HepG2 (cell line): ENCODE measurements at regions of chr3 and their contacts with region 1.

Region 1: DNA sequence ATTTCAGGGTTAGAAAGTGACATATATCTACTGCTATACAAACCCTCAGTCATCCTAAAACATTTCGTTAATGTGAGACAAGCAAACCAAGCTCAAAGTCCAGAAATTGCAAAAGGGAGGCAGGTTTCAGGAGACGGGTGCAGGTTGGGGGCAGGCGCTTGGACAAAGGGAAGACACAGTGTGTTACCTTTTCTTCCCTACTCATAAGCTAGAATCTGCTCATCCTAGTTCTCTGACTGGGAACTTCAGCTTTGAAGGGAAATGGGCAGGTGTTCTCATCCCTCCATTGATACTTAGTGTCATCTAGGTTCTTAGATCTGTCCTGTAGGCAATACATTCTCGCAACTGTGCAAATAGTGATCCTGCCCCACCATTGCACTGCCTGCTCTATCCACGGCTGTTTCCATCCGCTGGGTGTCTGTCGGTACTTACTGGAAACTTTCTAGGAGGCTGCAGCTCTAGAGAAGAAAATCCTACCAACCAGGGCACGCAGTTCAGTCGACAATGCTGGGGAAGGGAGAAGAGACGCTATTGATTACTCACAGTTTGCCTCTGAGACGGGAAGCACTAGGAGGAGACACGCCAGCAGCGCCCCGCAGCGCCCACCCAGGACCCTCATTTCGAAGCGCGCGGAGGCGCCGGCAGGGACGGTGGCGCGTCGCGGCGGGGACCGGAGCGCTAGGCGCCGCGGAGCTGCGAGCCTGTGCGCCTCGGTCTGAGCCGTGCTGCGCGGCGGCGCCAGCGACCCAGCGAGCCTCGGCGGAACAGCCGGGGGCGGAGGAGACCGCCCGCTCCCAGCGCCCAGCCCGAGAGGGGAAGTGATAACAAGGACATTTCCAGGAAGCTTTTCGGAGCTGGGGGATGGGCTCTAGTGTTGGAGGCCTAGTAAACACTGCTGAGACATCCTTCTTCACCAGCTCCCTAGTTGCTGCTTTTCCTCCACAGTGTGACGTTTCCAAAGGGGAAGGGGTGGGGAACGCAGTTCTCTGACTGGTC is at the start of gene PROS1:
- DNase-seq: peak; percentile 85
- ATAC-seq: peak; percentile 95
- H3K4me3 ChIP-seq: peak within 1 kb of the TSS; percentile 77 to 84 (median 81)
- H3K27ac ChIP-seq: peak within 1 kb of the TSS; percentile 91
- H3K4me1 ChIP-seq: peaks cover 14% of the 10 kb centered on the region
- H3K27me3 ChIP-seq: no peaks in the 10 kb centered on the region; a peak in 1 of 5 replicates
- CTCF ChIP-seq: peak; percentile 41; the same call in 1 of the 2 replicates
- EP300 ChIP-seq: peak in 1 of 2 experiments; percentile 1; a peak in 1 of 4 replicates
- POLR2A ChIP-seq: peak; percentile 60 to 66
- RAD21 ChIP-seq: peak; percentile 31; the same call in 1 of the 2 replicates
- total RNA-seq, gene PROS1: 45.6 and 76.8 TPM in 2 replicates

Region 2: GRCh38 chr3:93924491-93924890 is 48.9 kb before region 1 on chr3:
- CTCF ChIA-PET with region 1: no interaction called
- POLR2A ChIA-PET with region 1: no interaction called
- in situ Hi-C with region 1: no loop called
- intact Hi-C with region 1: loop called (anchors 5 kb)
- DNase-seq: no peak
- ATAC-seq: no peak
- H3K4me3 ChIP-seq: no peak overlapping the region
- H3K27ac ChIP-seq: no peak overlapping the region
- H3K4me1 ChIP-seq: no peaks in the 10 kb centered on the region
- H3K27me3 ChIP-seq: no peaks in the 10 kb centered on the region
- CTCF ChIP-seq: no peak
- EP300 ChIP-seq: no peak
- POLR2A ChIP-seq: no peak
- RAD21 ChIP-seq: no peak

Region 3: DNA sequence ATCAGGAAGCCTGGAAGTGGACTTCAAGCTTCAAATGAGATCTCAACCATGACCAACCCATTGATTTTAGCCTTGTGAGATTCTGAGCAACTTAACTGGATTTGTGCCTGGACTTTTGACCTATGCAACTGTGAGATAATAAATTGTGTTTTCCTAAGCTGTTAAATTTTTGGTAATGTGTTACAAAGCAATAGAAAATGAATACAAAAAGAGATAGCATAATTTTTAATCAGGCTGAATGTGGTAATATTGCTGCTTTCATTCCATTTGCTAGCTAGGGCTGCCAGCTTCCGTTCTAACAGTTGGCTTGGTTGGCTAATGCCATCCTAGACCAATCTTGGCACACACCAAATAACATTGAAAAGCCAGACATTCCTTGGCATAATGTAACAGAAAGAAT is 11.9 kb before region 1 on chr3:
- CTCF ChIA-PET with region 1: no interaction called
- POLR2A ChIA-PET with region 1: interaction called, 10 read pairs
- in situ Hi-C with region 1: no loop called
- intact Hi-C with region 1: no loop called
- DNase-seq: no peak
- ATAC-seq: no peak
- H3K4me3 ChIP-seq: no peak overlapping the region
- H3K27ac ChIP-seq: no peak overlapping the region
- H3K4me1 ChIP-seq: peaks cover 27% of the 10 kb centered on the region
- H3K27me3 ChIP-seq: no peaks in the 10 kb centered on the region
- CTCF ChIP-seq: no peak
- EP300 ChIP-seq: no peak
- POLR2A ChIP-seq: no peak
- RAD21 ChIP-seq: no peak

Region 4: DNA sequence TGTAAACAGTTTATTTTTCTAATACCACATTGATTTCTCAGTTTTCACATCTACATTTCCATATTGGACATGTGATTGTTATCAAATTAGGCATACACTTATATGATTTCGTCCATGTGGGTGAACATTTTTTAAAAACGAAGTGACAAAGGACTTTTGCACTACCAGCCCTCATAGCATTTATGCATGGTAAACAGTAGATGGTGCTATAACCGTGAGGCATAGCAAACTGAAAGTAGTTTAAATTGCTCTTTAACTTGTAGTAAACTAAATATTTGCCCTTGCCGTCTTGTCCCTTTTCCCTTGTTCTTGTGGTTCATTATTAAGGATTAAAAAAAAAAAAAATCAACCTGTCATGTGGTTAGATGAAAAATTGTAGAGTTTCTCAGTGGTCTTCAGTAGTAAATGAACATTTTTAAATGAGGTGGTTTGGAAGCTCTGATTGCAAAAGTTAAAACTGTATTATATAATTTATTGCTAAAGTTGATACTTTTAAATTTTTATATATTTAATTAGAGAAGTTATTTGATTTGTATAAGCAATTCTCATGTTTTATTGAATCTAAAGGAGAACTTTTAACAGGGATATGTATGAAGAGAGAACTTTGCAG is 31.0 kb after region 1 on chr3:
- CTCF ChIA-PET with region 1: no interaction called
- POLR2A ChIA-PET with region 1: interaction called, 3 read pairs
- in situ Hi-C with region 1: no loop called
- intact Hi-C with region 1: loop called (anchors 1 kb)
- DNase-seq: peak; percentile 60
- ATAC-seq: peak; percentile 67
- H3K4me3 ChIP-seq: 0 out of 6 replicates have a peak overlapping the region, but pooled peaks of 1 of the 3 experiments have one; percentile 31
- H3K27ac ChIP-seq: peak overlapping the region; percentile 11
- H3K4me1 ChIP-seq: no peaks in the 10 kb centered on the region
- H3K27me3 ChIP-seq: no peaks in the 10 kb centered on the region
- CTCF ChIP-seq: peak; percentile 81
- EP300 ChIP-seq: no peak
- POLR2A ChIP-seq: no peak
- RAD21 ChIP-seq: no peak

Region 5: GRCh38 chr3:94076055-94076454 is 102.6 kb after region 1 on chr3:
- CTCF ChIA-PET with region 1: no interaction called
- POLR2A ChIA-PET with region 1: no interaction called
- in situ Hi-C with region 1: no loop called
- intact Hi-C with region 1: no loop called
- DNase-seq: no peak
- ATAC-seq: no peak
- H3K4me3 ChIP-seq: no peak overlapping the region
- H3K27ac ChIP-seq: no peak overlapping the region
- H3K4me1 ChIP-seq: peaks cover 15% of the 10 kb centered on the region
- H3K27me3 ChIP-seq: no peaks in the 10 kb centered on the region
- CTCF ChIP-seq: no peak
- EP300 ChIP-seq: no peak
- POLR2A ChIP-seq: no peak
- RAD21 ChIP-seq: no peak

Region 6: GRCh38 chr3:94162700-94163099 is 189.3 kb after region 1 on chr3:
- CTCF ChIA-PET with region 1: no interaction called
- POLR2A ChIA-PET with region 1: no interaction called
- in situ Hi-C with region 1: no loop called
- intact Hi-C with region 1: no loop called
- DNase-seq: peak; percentile 13
- ATAC-seq: peak; percentile 50; the same call in 2 of the 3 replicates
- H3K4me3 ChIP-seq: no peak overlapping the region
- H3K27ac ChIP-seq: no peak overlapping the region
- H3K4me1 ChIP-seq: no peaks in the 10 kb centered on the region
- H3K27me3 ChIP-seq: no peaks in the 10 kb centered on the region; a peak in 1 of 5 replicates
- CTCF ChIP-seq: no peak
- EP300 ChIP-seq: no peak
- POLR2A ChIP-seq: no peak
- RAD21 ChIP-seq: no peak